GM18951 (cell line): ENCODE measurements at regions of chr13 and their contacts with region 1.

Region 1: GRCh38 chr13:74287724-74288169 is 153.5 kb upstream of the KLF12 start:
- POLR2A ChIP-seq: no peak

Region 2: GRCh38 chr13:73754727-73755292 is 532.9 kb before region 1 on chr13:
- in situ Hi-C with region 1: loop called (anchors 10 kb)
- POLR2A ChIP-seq: no peak

Region 3: DNA sequence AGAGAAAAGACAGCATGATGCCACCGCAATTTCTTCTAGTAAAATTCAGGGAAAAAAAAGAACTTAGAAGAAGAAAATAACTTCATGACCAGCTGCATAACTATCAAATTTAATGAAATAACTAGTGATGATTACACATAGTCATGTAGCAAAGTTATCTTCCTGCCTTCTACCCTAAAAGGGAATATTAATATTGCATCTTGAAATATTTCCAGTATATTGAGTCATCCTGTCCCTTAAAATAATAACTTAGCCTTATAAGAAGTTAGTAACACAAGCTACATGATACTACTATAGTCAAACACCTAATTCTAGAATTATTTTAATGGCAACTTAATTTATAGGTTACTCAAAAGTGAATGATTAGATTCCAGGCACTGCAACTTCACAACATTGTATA is 442.8 kb before region 1 on chr13:
- in situ Hi-C with region 1: loop called (anchors 5 kb)
- POLR2A ChIP-seq: no peak

Region 4: GRCh38 chr13:74040200-74040599 is 247.5 kb before region 1 on chr13:
- in situ Hi-C with region 1: no loop called
- POLR2A ChIP-seq: no peak

Region 5: DNA sequence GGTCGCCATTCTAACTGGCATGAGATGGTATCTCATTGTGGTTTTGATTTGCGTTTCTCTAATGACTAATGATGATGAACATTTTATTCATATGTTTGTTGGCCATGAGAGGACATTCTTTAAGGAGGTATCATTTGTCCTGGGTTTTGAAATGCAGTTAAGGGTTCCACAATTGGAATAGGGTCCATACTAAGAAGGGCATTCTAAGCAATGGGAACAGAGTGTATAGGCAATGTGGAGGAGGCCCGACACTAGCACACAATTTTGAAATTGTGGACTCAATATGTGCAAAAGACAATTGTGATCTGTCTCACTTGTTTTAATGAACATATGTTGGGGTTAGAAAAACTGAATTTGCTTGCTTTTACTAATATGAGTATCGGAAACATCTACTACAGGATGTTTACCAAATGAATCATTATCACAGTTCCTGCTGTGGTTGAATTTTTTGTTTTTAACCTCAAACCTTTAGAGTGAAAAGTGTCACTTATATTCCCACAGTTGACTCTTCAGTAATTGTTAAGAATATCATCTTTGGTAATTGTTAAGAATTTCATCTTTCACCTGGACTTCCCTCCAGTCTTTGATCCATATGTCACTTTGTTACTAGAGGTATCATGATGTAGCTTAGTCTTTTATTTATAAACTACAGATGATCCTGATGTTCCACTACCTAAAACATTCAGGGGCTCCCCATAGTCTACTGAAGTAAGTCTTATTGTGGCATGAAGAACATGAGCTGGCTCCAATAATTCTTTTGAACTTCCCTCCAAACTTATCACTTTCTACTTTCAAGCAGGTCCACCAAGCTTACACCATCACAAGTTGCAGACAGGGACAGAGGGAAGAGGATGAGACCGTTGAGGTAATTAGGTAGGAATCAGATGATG is 43.9 kb before region 1 on chr13:
- in situ Hi-C with region 1: no loop called
- POLR2A ChIP-seq: no peak